BJ (cell line): ENCODE measurements at regions of chr1 and their contacts with region 1.

Region 1: GRCh38 chr1:6750490-6750889 is 34.8 kb upstream of the CAMTA1 start:
- DNase-seq: no peak
- H3K4me3 ChIP-seq: no peak overlapping the region
- H3K27me3 ChIP-seq: peaks cover 3% of the 10 kb centered on the region
- CTCF ChIP-seq: no peak

Region 2: GRCh38 chr1:6703016-6703415 is 47.5 kb before region 1 on chr1:
- CTCF ChIA-PET with region 1: no interaction called
- POLR2A ChIA-PET with region 1: interaction called, 10 read pairs
- DNase-seq: no peak
- H3K4me3 ChIP-seq: no peak overlapping the region
- H3K27me3 ChIP-seq: no peaks in the 10 kb centered on the region
- CTCF ChIP-seq: no peak

Region 3: GRCh38 chr1:6762060-6762459 is 11.6 kb after region 1 on chr1:
- CTCF ChIA-PET with region 1: no interaction called
- POLR2A ChIA-PET with region 1: no interaction called
- DNase-seq: no peak
- H3K4me3 ChIP-seq: no peak overlapping the region
- H3K27me3 ChIP-seq: no peaks in the 10 kb centered on the region
- CTCF ChIP-seq: no peak

Region 4: DNA sequence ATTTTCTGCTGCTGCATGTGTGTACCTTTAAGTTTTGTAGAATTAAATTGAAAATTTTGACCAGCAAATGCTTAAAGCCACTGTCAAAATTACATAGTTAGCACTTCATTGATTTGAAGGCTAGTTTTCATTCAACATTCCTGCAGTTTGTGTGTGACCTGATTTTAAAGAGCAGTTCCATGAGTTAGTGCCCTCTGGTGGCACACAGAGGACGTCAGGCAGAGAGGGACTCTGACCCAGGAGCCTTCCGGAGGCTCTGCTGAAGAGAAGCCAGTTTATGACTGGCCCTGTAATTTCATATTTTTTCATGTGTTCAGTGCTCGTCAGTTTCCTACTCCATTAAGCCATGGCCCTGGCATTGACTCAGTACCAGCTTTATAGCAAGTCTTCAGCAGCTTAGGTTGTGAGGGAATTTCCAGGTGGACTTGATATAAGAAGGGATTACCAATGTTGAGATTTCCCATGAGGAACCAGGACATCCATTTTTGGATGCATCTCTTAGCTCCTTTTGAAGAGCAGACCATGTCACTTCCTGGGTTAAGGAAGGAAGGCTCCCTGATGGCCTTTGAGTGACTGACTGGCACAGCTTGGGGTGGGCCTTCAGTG is 139.5 kb after region 1 on chr1:
- CTCF ChIA-PET with region 1: no interaction called
- POLR2A ChIA-PET with region 1: no interaction called
- DNase-seq: no peak
- H3K4me3 ChIP-seq: no peak overlapping the region
- H3K27me3 ChIP-seq: no peaks in the 10 kb centered on the region
- CTCF ChIP-seq: peak; percentile 86